ENCODE measurements at regions of chr6 and their contacts with region 1.

Region 1: DNA sequence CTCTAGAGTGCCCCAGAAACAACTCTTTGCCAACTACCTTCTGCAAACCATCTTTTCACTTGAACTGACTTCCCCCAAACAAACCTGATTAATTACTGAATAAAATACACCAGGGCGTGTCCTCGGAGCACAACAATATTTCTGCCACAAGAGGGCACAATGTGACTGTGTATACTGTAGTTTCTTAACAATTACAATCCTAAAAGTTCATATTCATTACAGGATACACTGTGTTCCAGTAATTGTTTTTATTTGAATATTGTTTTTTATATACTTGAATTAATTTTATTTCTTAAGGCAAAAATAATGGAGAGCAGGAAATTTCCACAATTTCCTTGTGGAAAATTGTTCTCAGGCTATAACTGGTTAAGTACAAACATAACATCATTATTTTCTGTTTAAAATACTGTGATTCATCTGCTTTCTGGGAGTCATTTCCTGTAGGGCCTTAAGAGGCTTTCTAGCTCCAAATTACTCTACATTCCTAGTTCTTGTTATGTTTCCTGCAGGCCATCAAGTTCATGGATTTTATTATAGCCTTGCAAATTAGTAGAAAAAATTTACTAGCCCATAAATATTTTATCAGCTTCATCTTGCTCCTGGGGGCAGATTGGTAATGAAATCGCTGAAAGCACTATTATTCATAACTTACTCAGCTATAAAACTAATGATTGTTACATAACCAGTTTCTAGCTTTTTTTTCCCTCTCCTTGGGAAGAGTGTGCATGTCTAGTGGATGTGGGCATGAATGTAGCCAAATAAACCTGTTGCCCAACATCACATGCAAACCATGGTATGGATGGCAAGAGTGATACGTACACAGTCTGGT is 51.9 kb upstream of the SLC22A16 start:
- DNase-seq: peak in 5 of 10 donors; percentile 45 to 74 (median 50)
- H3K4me3 ChIP-seq: peak overlapping the region in 2 of 59 donors; percentile 7 to 26
- H3K27ac ChIP-seq: peak overlapping the region in 45 of 59 donors; percentile 1 to 78 (median 51)
- H3K27me3 ChIP-seq: no peaks in the 10 kb centered on the region
- CTCF ChIP-seq: peak; percentile 72 to 98 (median 90)

Region 2: DNA sequence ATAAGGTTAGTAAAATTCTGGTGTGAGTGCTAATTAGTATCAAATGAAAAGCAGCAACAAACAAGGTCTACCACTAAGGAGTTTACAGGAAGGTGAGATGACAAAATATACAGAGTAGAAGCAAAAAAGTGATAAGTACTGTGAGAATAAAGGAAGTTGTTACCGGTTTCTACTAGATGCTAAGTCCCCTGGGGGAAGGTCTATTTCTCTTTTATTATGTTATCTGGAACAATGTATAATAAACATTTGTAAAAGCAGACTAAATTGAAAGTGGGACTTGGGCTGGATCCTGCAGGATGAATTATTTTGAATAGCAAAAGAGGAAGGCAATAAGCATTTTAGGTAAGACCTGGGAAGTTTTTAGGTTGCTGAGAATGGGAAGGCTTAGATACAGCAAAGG is 106.8 kb after region 1 on chr6:
- intact Hi-C with region 1: no loop called
- DNase-seq: no peak
- H3K4me3 ChIP-seq: no peak overlapping the region
- H3K27ac ChIP-seq: peak overlapping the region in 18 of 59 donors; percentile 2 to 74 (median 24)
- H3K27me3 ChIP-seq: no peaks in the 10 kb centered on the region
- CTCF ChIP-seq: no peak

Region 3: GRCh38 chr6:110873981-110874879 is 345.9 kb after region 1 on chr6 and contains the start of gene AMD1:
- intact Hi-C with region 1: loop called (anchors 2 to 5 kb)
- DNase-seq: peak; percentile 97 to 99 (median 98)
- H3K4me3 ChIP-seq: peak within 1 kb of the TSS; percentile 64 to 99 (median 92)
- H3K27ac ChIP-seq: peak within 1 kb of the TSS; percentile 72 to 98 (median 93)
- H3K27me3 ChIP-seq: no peaks in the 10 kb centered on the region
- CTCF ChIP-seq: peak in 22 of 56 donors; percentile 2 to 49 (median 15)
- total RNA-seq, gene AMD1: 51.8 to 156 (median 104) TPM

Region 4: GRCh38 chr6:110944681-110945151 is 416.4 kb after region 1 on chr6:
- intact Hi-C with region 1: loop called (anchors 2 to 5 kb)
- DNase-seq: peak in 5 of 10 donors; percentile 7 to 61 (median 42)
- H3K4me3 ChIP-seq: no peak overlapping the region
- H3K27ac ChIP-seq: peak overlapping the region in 7 of 59 donors; percentile 21 to 80 (median 46)
- H3K27me3 ChIP-seq: no peaks in the 10 kb centered on the region
- CTCF ChIP-seq: no peak

Region 5: GRCh38 chr6:110949679-110950285 is 421.5 kb after region 1 on chr6:
- intact Hi-C with region 1: loop called (anchors 2 to 5 kb)
- DNase-seq: no peak
- H3K4me3 ChIP-seq: peak overlapping the region in 44 of 59 donors; percentile 6 to 56 (median 30)
- H3K27ac ChIP-seq: peak overlapping the region in 10 of 59 donors; percentile 8 to 65 (median 21)
- H3K27me3 ChIP-seq: no peaks in the 10 kb centered on the region
- CTCF ChIP-seq: peak; percentile 25 to 87 (median 68)

Region 6: GRCh38 chr6:110999634-111000270 is 471.4 kb after region 1 on chr6:
- intact Hi-C with region 1: loop called (anchors 5 kb)
- DNase-seq: no peak
- H3K4me3 ChIP-seq: peak overlapping the region in 1 of 59 donors; percentile 12
- H3K27ac ChIP-seq: peak overlapping the region in 6 of 59 donors; percentile 3 to 38 (median 18)
- H3K27me3 ChIP-seq: no peaks in the 10 kb centered on the region
- CTCF ChIP-seq: peak; percentile 8 to 85 (median 61)

Region 7: GRCh38 chr6:111210194-111210728 is 681.9 kb after region 1 on chr6:
- intact Hi-C with region 1: loop called in 1 of 2 experiments (anchors 10 kb)
- DNase-seq: peak in 1 of 10 donors; percentile 6
- H3K4me3 ChIP-seq: no peak overlapping the region
- H3K27ac ChIP-seq: no peak overlapping the region
- H3K27me3 ChIP-seq: no peaks in the 10 kb centered on the region
- CTCF ChIP-seq: peak; percentile 43 to 79 (median 63)

Region 8: DNA sequence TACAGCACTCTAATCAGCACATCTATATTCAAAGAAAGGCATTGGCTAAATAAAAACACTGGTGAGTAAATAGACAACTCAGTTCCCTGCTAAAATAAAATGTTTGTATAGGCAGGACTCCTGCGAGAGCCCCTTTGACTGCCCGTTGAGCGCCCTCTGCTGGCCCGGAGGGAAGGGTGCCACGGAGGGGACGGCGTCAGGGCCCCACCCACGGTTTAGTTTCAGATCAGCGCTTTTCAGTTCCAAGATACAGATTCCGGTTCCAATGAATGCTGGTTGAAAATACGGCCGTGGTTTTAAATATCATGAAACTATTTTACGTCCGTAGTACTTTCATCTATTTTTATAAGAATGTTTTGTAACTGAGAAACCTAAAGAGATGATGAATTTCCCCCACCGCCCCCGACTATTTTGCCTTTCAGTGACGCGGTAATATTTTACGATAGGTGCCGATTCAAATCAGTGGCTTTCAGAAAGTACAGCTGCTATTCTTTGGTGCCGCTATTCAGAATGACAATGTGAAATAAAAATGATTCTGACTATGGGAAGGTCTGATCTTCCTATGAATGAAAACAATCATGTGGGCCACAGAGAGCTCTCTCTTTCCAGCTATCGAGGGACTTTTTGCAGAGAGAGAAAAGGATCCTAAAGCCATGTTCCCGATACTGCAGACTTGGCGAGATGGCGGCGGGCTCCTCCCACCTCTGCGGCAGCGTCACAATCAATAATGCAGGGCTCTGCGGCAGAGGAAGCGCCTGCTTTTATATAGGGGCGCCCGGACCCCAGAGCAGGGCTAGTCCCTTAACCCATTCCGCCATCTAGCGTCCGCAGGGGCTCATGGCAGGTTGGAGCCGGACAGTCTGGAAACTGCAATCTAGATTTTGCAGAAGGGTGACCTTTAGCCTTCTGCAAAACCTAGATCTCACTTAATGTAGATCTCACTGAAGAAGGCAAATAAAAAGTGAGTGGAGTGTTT is 1515.0 kb after region 1 on chr6:
- intact Hi-C with region 1: loop called in 1 of 2 experiments (anchors 5 kb)
- DNase-seq: peak; percentile 88 to 95 (median 92)
- H3K4me3 ChIP-seq: peak overlapping the region; percentile 41 to 83 (median 67)
- H3K27ac ChIP-seq: peak overlapping the region; percentile 10 to 97 (median 87)
- H3K27me3 ChIP-seq: no peaks in the 10 kb centered on the region
- CTCF ChIP-seq: peak; percentile 83 to 99 (median 93)

Measured in dorsolateral prefrontal cortex (tissue), 120 donors.